ENCODE measurements at regions of chr15 and their contacts with region 1.

Region 1: GRCh38 chr15:99704444-99704838 is 28.8 kb downstream of the LYSMD4 start:
- DNase-seq: peak; percentile 92
- H3K4me3 ChIP-seq: no peak overlapping the region
- H3K27ac ChIP-seq: peak overlapping the region; percentile 75
- H3K4me1 ChIP-seq: peaks cover 46% of the 10 kb centered on the region
- H3K27me3 ChIP-seq: no peaks in the 10 kb centered on the region
- CTCF ChIP-seq: peak; percentile 50 to 61
- POLR2A ChIP-seq: no peak

Region 2: DNA sequence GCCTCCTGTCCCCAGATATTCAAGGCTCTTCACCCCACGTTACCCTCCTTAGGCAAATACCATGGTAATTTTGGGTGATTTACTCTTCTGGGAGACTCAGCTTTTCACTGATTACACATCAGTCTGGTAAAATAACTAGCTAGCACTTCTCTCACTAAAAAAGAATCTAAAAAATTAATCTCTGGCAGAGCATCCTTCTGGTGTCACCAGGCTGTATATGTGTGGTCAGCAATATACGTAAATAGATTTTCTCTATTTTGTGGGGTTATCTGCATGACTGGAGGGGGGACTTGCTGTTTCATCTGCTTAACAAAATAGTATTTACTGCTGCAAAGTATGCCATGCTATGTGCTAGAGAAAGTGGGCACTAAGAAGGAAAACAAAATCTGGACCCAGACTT is 408.1 kb before region 1 on chr15:
- CTCF ChIA-PET with region 1: interaction called, 20 read pairs
- POLR2A ChIA-PET with region 1: no interaction called
- dilution Hi-C with region 1: loop called (anchors 25 kb)
- intact Hi-C with region 1: no loop called
- DNase-seq: no peak
- H3K4me3 ChIP-seq: no peak overlapping the region
- H3K27ac ChIP-seq: no peak overlapping the region
- H3K4me1 ChIP-seq: no peaks in the 10 kb centered on the region
- H3K27me3 ChIP-seq: no peaks in the 10 kb centered on the region
- CTCF ChIP-seq: no peak
- POLR2A ChIP-seq: no peak

Region 3: DNA sequence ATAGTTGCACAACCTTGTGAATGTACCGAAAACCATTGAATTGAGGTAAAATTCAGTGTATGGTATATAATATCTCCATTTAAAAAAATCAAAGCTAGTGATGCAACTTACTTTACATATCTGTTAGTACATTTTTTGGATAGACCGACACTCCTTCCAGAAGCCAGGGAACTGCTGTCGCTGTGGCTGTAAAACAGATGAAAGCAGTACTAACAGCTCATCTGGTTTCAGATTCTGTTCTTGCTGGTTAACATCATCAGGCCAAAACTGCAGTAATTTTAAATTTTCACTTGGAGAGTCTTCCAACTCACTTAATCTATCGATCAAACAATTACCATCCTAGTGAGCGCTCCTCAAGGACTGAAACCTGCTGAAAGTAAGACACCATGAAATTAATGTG is 308.1 kb before region 1 on chr15:
- CTCF ChIA-PET with region 1: interaction called, 22 read pairs
- POLR2A ChIA-PET with region 1: no interaction called
- dilution Hi-C with region 1: no loop called
- intact Hi-C with region 1: no loop called
- DNase-seq: no peak
- H3K4me3 ChIP-seq: no peak overlapping the region
- H3K27ac ChIP-seq: no peak overlapping the region
- H3K4me1 ChIP-seq: no peaks in the 10 kb centered on the region
- H3K27me3 ChIP-seq: no peaks in the 10 kb centered on the region
- CTCF ChIP-seq: no peak
- POLR2A ChIP-seq: no peak

Region 4: GRCh38 chr15:99452774-99453636 is 251.4 kb before region 1 on chr15:
- CTCF ChIA-PET with region 1: interaction called, 27 read pairs
- POLR2A ChIA-PET with region 1: no interaction called
- dilution Hi-C with region 1: no loop called
- intact Hi-C with region 1: no loop called
- DNase-seq: peak; percentile 67
- H3K4me3 ChIP-seq: no peak overlapping the region
- H3K27ac ChIP-seq: peak overlapping the region; percentile 97
- H3K4me1 ChIP-seq: peaks cover 56% of the 10 kb centered on the region
- H3K27me3 ChIP-seq: no peaks in the 10 kb centered on the region
- CTCF ChIP-seq: no peak
- POLR2A ChIP-seq: peak; percentile 14

Region 5: GRCh38 chr15:99578809-99579208 is 125.6 kb before region 1 on chr15:
- CTCF ChIA-PET with region 1: interaction called, 19 read pairs
- POLR2A ChIA-PET with region 1: no interaction called
- dilution Hi-C with region 1: no loop called
- intact Hi-C with region 1: no loop called
- DNase-seq: no peak
- H3K4me3 ChIP-seq: no peak overlapping the region
- H3K27ac ChIP-seq: no peak overlapping the region
- H3K4me1 ChIP-seq: no peaks in the 10 kb centered on the region
- H3K27me3 ChIP-seq: no peaks in the 10 kb centered on the region
- CTCF ChIP-seq: no peak
- POLR2A ChIP-seq: no peak

Region 6: GRCh38 chr15:99733268-99734039 is 29.0 kb after region 1 on chr15 and contains the start of gene LYSMD4:
- CTCF ChIA-PET with region 1: interaction called, 71 read pairs
- POLR2A ChIA-PET with region 1: interaction called, 9 read pairs
- dilution Hi-C with region 1: no loop called
- intact Hi-C with region 1: loop called (anchors 1 kb)
- DNase-seq: peak; percentile 93
- H3K4me3 ChIP-seq: peak within 1 kb of the TSS; percentile 63 to 79 (median 71)
- H3K27ac ChIP-seq: peak within 1 kb of the TSS; percentile 21
- H3K4me1 ChIP-seq: peaks cover 5% of the 10 kb centered on the region
- H3K27me3 ChIP-seq: no peaks in the 10 kb centered on the region
- CTCF ChIP-seq: no peak
- POLR2A ChIP-seq: no peak
- total RNA-seq, gene LYSMD4: 7.0 and 8.4 TPM in 2 replicates

Measured in endothelial cell of umbilical vein (primary cell).